ENCODE measurements at regions of chr1 and their contacts with region 1.

Region 1: GRCh38 chr1:164617377-164618201 is 58.6 kb downstream of the PBX1 start:
- DNase-seq: peak; percentile 23
- ATAC-seq: 0 out of 3 replicates have a peak, but pooled peaks have one; percentile 41
- H3K4me3 ChIP-seq: no peak overlapping the region
- H3K27ac ChIP-seq: no peak overlapping the region
- H3K4me1 ChIP-seq: peaks cover 10% of the 10 kb centered on the region
- H3K27me3 ChIP-seq: no peaks in the 10 kb centered on the region
- CTCF ChIP-seq: peak; percentile 65
- EP300 ChIP-seq: no peak
- POLR2A ChIP-seq: no peak
- RAD21 ChIP-seq: peak; percentile 52

Region 2: GRCh38 chr1:163361123-163361934 is 1256.3 kb before region 1 on chr1:
- CTCF ChIA-PET with region 1: no interaction called
- POLR2A ChIA-PET with region 1: no interaction called
- in situ Hi-C with region 1: no loop called
- intact Hi-C with region 1: loop called (anchors 5 kb)
- DNase-seq: peak; percentile 12
- ATAC-seq: peak; percentile 66
- H3K4me3 ChIP-seq: no peak overlapping the region
- H3K27ac ChIP-seq: no peak overlapping the region
- H3K4me1 ChIP-seq: no peaks in the 10 kb centered on the region
- H3K27me3 ChIP-seq: no peaks in the 10 kb centered on the region
- CTCF ChIP-seq: peak; percentile 61
- EP300 ChIP-seq: no peak
- POLR2A ChIP-seq: no peak
- RAD21 ChIP-seq: no peak

Region 3: DNA sequence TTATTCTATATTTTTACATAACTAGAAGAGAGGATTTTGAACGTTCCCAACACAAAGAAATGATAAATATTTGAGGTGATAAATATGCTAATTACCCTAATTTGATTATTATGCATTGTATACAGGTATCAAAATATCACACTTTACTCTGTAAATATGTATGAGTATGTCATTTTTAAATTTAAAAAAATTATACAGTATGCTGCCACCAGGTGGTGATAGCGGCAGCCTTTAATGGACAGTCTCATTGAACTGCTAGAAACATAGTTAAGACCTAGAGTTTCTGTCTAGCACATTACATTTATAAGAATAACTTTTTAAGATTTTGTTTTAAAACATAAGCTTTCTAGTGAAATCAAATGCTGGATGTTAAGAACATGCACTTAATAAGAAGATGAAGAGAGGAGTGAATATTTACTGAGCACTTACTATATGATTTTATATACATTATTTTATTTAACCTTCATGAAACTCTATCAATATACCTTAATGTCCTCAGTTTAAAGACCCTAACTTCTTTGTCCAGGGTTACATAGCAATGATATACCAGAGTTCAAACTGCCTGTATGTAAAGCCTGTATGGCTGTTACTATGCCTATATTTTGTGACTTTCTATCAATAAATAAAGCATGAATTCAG is 1088.8 kb before region 1 on chr1:
- CTCF ChIA-PET with region 1: interaction called, 10 read pairs
- POLR2A ChIA-PET with region 1: no interaction called
- in situ Hi-C with region 1: loop called (anchors 10 kb)
- intact Hi-C with region 1: loop called (anchors 2 kb)
- DNase-seq: peak; percentile 7
- ATAC-seq: peak; percentile 54
- H3K4me3 ChIP-seq: no peak overlapping the region
- H3K27ac ChIP-seq: no peak overlapping the region
- H3K4me1 ChIP-seq: 0 out of 2 replicates have a peak, but pooled peaks cover 5% of the 10 kb centered on the region
- H3K27me3 ChIP-seq: no peaks in the 10 kb centered on the region
- CTCF ChIP-seq: peak; percentile 33; the same call in 1 of the 2 replicates
- EP300 ChIP-seq: no peak
- POLR2A ChIP-seq: no peak
- RAD21 ChIP-seq: no peak

Region 4: DNA sequence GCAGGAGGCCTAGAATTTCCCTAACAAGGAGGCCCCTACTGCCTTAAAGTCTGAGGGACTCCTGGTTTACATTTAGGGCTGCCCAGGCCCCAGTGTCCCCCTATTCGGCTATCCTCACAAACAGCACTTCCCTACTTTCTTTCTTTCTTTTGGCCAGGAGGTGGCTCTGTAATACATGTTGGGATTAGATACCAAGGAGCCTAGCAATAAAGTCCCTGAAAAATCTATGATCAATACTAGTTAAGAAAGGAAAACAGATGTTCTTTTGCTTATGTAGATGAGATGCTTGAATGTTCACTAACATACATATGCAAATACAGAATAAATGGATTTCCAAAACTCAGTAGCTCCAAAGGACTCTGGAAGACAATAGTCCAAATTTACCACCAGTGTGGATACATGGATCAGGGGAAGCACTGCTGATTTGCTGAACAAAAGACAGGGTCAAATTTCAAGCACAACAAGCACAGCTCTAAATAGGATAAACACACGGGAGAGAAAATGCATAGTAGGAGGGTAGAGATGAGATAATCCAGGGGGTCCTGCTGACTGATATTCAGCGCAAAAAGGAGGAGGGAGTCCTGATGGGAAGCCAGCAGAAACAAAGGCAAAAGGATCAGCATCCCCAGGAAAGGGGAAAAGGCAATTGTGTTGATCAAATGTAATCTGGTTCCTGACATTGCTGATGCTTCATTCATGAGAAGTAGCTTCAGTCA is 1055.9 kb before region 1 on chr1:
- CTCF ChIA-PET with region 1: no interaction called
- POLR2A ChIA-PET with region 1: no interaction called
- in situ Hi-C with region 1: no loop called
- intact Hi-C with region 1: loop called (anchors 1 kb)
- DNase-seq: peak; percentile 9
- ATAC-seq: peak; percentile 64; the same call in 2 of the 3 replicates
- H3K4me3 ChIP-seq: no peak overlapping the region
- H3K27ac ChIP-seq: no peak overlapping the region
- H3K4me1 ChIP-seq: no peaks in the 10 kb centered on the region
- H3K27me3 ChIP-seq: no peaks in the 10 kb centered on the region
- CTCF ChIP-seq: peak; percentile 31
- EP300 ChIP-seq: no peak
- POLR2A ChIP-seq: no peak
- RAD21 ChIP-seq: no peak

Region 5: GRCh38 chr1:164240083-164240482 is 377.5 kb before region 1 on chr1:
- CTCF ChIA-PET with region 1: no interaction called
- POLR2A ChIA-PET with region 1: no interaction called
- in situ Hi-C with region 1: no loop called
- intact Hi-C with region 1: loop called (anchors 2 kb)
- DNase-seq: no peak
- ATAC-seq: no peak
- H3K4me3 ChIP-seq: no peak overlapping the region
- H3K27ac ChIP-seq: no peak overlapping the region
- H3K4me1 ChIP-seq: no peaks in the 10 kb centered on the region
- H3K27me3 ChIP-seq: no peaks in the 10 kb centered on the region
- CTCF ChIP-seq: no peak
- EP300 ChIP-seq: no peak
- POLR2A ChIP-seq: no peak
- RAD21 ChIP-seq: no peak